AG04449 (cell line): ENCODE measurements at regions of chr22 and their contacts with region 1.

Region 1: GRCh38 chr22:36856121-36856791 is 4.5 kb upstream of the NCF4 start:
- DNase-seq: no peak
- H3K4me3 ChIP-seq: no peak overlapping the region; the same call in 1 of the 2 replicates
- CTCF ChIP-seq: peak; percentile 100

Region 2: GRCh38 chr22:36352803-36353507 is 503.3 kb before region 1 on chr22:
- CTCF ChIA-PET with region 1: no interaction called
- POLR2A ChIA-PET with region 1: no interaction called
- DNase-seq: no peak
- H3K4me3 ChIP-seq: no peak overlapping the region
- CTCF ChIP-seq: no peak

Region 3: DNA sequence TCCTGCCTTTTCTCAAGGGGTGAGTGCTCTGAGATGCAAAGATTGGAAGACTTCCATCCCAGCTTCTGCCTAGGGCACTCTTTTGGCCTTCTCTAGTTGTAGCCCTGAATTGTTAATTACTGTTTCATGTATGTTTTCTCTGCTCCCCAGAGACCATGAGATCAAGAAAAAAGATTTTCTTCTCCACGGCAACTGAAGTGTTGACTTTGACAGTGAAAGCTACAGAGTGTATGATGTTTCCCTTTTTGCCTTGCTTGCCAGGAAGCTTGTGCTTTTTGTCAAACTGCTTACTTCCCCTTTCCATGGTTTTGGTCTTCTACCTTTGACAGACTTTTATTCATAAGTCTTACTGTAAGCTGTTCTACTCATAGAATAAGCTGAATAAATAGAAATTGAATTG is 304.0 kb before region 1 on chr22:
- CTCF ChIA-PET with region 1: interaction called, 153 read pairs
- POLR2A ChIA-PET with region 1: no interaction called
- DNase-seq: no peak
- H3K4me3 ChIP-seq: no peak overlapping the region
- CTCF ChIP-seq: no peak

Region 4: GRCh38 chr22:36702842-36703215 is 153.4 kb before region 1 on chr22:
- CTCF ChIA-PET with region 1: no interaction called
- POLR2A ChIA-PET with region 1: no interaction called
- DNase-seq: no peak
- H3K4me3 ChIP-seq: no peak overlapping the region
- CTCF ChIP-seq: no peak

Region 5: GRCh38 chr22:36828815-36829214 is 27.4 kb before region 1 on chr22:
- CTCF ChIA-PET with region 1: interaction called, 15 read pairs
- POLR2A ChIA-PET with region 1: no interaction called
- DNase-seq: no peak
- H3K4me3 ChIP-seq: no peak overlapping the region
- CTCF ChIP-seq: no peak

Region 6: DNA sequence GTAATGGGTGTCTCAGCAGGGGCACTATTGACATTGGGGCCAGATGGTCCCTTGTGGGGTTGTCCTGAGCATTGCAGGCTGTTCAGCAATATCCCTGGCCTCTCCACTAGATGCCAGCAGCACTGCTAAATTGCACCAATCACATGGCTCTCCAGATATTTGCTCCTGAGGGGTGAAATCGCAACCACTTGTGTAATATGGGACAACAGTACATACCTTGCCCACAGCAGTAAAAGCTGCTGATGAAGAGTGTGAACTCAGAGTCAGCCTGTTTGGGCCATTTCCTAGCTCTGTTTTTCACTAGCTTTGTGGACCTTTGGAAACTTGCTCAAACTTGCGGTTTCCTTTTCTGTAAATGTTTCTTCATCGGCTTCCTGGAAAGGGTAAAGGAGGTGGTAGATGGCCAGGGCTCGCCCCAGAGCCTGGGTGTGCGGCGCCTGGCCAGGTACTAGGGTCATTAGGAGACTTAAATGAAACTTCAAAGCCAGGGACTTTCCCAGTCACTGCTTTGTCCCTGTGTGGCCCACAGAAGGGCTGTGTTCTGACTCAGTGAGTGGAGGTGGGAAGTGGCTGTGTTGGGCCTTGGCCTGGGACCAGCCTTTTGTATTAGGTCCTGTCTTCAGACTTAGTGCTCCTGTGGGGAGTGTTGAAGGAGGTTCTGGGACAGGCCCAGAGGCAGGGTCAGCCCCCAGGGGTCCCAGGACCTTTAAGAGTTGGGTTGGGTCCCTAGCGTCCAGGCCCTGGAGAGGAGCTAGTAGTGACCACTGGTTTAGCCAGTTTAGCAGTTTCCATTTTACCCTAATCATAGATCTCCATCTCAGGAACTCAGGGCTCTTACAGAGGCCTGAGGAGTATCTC is 17.7 kb after region 1 on chr22:
- CTCF ChIA-PET with region 1: interaction called, 65 read pairs
- POLR2A ChIA-PET with region 1: no interaction called
- DNase-seq: no peak
- H3K4me3 ChIP-seq: no peak overlapping the region
- CTCF ChIP-seq: peak; percentile 52

Region 7: GRCh38 chr22:36891646-36892045 is 35.4 kb after region 1 on chr22:
- CTCF ChIA-PET with region 1: interaction called, 23 read pairs
- POLR2A ChIA-PET with region 1: no interaction called
- DNase-seq: no peak
- H3K4me3 ChIP-seq: no peak overlapping the region
- CTCF ChIP-seq: no peak

Region 8: DNA sequence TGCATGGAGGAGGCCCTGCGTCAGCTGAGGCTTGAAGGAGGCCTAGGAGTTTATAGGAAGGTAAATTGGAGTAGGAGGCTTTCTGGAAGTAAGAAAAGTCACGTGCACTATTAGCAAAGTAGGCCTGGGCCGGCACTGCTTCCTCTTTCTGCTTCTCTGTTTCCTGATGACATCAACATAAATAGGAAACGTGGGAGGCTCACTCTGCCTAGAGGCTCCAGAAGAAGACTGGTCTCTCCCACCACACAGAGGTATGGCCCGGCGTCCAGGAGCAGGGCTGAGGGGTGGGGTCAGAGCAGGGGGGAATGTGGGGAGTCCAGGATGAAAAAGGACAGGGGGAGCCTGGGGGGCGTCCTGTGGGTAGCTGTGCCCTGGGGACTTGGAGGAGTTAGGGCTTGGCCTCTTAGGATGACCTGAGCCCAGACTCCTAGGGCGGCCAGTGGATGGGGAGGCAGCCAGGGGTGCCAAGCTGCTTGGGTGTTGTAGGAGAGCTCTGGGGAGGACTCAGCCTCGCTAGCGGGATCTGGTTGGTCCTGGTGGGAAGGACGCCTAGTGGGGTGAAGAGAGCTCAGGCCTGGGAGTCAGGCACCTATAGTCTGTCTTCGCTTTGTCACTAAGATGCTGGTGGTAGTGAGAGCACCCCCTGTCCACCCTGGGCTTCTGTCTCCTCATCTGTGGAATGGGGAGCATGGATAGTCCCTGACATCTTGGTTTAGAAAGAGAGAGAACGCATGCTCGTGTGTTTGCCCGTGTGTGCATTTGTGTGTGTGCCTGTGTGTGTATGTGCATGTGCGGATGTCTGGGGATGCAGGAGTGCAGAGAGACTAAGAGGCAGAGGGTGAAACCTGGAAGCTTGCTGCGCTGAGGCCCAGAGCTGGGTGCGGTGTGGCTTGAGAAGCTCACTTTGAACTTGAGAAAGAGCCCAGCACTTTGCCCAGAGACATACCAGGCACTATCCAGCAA is 57.5 kb after region 1 on chr22 and contains the start of gene CSF2RB:
- CTCF ChIA-PET with region 1: interaction called, 15 read pairs
- POLR2A ChIA-PET with region 1: no interaction called
- DNase-seq: no peak
- H3K4me3 ChIP-seq: no peak within 1 kb of the TSS
- CTCF ChIP-seq: no peak

Region 9: DNA sequence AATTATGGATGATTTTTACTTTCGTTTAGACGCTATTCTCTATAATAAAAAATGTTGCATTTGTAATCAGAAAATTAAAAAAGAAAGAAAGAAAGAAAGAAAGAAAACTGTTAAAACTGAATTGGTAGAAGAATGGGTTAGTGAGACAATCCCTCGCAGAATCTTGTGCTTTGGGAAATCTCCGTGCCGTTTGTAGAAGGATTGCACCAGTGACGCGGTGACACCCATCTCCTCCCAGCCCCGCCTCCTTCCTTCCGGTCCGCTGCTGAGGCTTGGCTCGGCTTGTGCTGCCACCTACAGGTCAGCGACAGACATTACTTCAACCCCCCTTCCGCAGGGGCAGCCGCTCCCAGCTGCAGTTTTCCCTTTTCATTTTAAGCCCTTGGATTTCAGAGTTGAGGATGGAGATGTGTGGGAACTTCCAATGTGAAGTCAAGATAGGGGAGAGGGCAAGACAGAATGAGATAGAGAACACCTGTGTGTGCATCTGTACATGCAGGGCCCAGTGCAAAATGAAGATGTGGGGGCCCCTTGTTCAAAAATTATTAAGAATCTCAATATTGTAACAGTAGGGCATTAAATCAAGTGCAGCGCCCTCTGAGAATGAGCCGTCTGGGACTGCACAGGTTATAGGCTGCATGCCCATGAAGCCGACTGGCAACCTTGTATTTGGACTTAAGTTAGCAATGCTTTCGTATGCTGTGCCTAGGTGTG is 121.8 kb after region 1 on chr22:
- CTCF ChIA-PET with region 1: interaction called, 106 read pairs
- POLR2A ChIA-PET with region 1: no interaction called
- DNase-seq: peak; percentile 12
- H3K4me3 ChIP-seq: peak overlapping the region; percentile 51
- CTCF ChIP-seq: peak; percentile 97

Region 10: DNA sequence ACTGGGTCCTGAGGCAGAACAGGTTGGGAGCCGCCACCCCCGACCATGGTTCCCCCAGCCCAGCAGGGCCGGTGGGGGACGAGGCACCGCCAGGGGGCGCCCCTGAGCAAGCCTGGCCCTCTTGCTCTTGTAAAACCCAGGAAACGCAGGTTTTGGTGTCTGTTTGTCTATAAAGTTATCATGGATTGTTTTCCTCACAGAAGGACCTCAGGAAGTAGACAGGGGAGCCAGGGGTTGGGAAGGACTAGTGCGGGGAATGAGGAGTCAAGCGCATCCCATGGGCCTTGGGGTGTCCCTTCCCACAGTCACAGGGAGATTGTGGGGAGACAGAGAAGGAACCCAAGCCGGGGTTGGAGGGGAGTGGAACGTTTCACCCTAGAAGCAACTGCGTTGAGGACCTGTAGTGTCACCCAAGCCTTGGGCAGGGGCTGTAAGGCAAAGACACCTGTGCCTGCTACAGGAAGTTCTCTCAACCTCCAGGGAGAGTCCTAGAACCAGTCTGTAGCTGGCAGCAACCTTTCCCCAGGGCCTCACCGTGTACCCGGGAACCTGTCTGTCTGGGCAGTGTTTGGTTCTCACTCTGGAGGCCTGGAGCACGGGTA is 221.7 kb after region 1 on chr22:
- CTCF ChIA-PET with region 1: no interaction called
- POLR2A ChIA-PET with region 1: no interaction called
- DNase-seq: no peak
- H3K4me3 ChIP-seq: no peak overlapping the region
- CTCF ChIP-seq: peak; percentile 96